WTC11 (cell line): ENCODE measurements at regions of chr2 and their contacts with region 1.

Region 1: DNA sequence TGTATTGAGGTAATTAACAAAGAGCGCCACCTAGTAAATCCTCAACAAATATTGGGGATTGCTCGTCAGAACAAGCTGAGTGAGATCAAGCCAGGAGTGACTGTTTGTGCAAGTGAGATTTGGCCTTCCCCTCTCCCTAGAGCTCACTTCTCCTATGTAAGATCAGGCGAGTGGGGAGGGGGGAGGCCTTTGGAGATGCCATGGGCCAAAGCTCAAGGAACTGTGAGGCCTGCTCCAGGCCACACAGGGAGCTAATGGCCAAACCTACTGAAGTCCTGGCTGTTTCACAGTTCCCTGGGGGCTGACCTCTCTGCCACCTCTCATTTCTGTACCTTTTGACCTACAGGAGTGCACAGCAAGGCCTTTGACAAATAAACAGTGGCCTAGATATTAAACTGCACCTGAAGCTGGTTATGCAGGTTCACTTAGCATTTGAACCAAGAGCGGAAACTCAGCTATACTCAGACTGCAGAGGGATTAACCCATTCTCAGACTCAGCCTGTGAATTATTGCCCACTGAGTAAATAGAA is 235.0 kb upstream of the NT5C1B start:
- DNase-seq: no peak
- ATAC-seq: peak; percentile 76
- H3K4me3 Mint-ChIP-seq: no peak overlapping the region
- H3K27ac Mint-ChIP-seq: no peak overlapping the region
- H3K4me1 Mint-ChIP-seq: 0 out of 2 replicates have a peak, but pooled peaks cover 3% of the 10 kb centered on the region
- H3K27me3 Mint-ChIP-seq: no peaks in the 10 kb centered on the region
- CTCF ChIP-seq: no peak

Region 2: GRCh38 chr2:18836436-18836835 is 12.1 kb after region 1 on chr2:
- CTCF ChIA-PET with region 1: interaction called, 21 read pairs
- POLR2A ChIA-PET with region 1: interaction called, 3 read pairs
- DNase-seq: no peak
- ATAC-seq: no peak
- H3K4me3 Mint-ChIP-seq: no peak overlapping the region
- H3K27ac Mint-ChIP-seq: no peak overlapping the region
- H3K4me1 Mint-ChIP-seq: peaks cover 29% of the 10 kb centered on the region
- H3K27me3 Mint-ChIP-seq: peaks cover 39% of the 10 kb centered on the region
- CTCF ChIP-seq: no peak

Region 3: DNA sequence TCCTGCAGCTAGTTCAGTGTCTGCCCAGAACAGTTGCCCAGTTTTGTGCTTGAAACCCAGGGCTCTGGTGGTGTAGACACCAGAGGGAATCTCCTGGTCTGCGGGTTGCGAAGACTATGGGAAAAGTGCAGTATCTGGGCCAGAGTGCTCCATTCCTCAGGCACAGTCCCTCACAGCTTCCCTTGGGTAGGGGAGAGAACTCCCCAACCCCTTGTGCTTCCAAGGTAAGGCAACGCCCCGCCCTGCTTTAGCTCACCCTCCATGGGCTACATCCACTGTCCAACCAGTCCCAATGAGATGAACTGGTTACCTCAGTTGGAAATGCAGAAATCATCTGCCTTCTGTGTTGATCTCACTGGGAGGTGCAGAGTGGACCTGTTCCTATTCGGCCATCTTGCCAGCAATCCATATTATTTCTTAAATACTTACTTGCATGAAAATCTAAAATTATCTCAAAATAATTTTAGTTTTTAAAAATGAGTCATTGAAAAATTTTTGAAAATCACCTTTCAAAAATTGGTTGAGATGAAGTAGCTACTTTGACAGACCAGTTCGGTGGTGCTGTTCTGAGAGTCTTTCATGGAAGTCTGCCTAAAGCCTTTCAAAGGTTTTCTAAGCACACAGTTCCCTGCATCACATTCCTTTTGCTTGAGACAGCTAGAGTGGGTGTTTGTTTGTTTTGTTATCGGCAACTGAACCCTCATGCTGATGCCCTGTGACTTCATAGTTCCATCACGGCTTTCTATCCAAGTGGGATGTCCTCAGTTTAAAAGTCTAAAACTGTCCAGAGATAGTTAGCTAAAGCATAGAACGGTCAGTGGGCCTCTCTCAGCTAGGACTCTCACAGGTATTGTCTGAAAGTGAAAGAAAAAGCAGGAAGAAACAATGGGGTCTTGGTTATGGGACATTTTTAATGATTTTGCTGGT is 196.5 kb after region 1 on chr2:
- CTCF ChIA-PET with region 1: no interaction called
- POLR2A ChIA-PET with region 1: no interaction called
- DNase-seq: no peak
- ATAC-seq: no peak
- H3K4me3 Mint-ChIP-seq: no peak overlapping the region
- H3K27ac Mint-ChIP-seq: no peak overlapping the region
- H3K4me1 Mint-ChIP-seq: peaks cover 7% of the 10 kb centered on the region
- H3K27me3 Mint-ChIP-seq: no peaks in the 10 kb centered on the region
- CTCF ChIP-seq: no peak